CD4-positive, alpha-beta T cell (primary cell): ENCODE measurements at regions of chr16 and their contacts with region 1.

Region 1: DNA sequence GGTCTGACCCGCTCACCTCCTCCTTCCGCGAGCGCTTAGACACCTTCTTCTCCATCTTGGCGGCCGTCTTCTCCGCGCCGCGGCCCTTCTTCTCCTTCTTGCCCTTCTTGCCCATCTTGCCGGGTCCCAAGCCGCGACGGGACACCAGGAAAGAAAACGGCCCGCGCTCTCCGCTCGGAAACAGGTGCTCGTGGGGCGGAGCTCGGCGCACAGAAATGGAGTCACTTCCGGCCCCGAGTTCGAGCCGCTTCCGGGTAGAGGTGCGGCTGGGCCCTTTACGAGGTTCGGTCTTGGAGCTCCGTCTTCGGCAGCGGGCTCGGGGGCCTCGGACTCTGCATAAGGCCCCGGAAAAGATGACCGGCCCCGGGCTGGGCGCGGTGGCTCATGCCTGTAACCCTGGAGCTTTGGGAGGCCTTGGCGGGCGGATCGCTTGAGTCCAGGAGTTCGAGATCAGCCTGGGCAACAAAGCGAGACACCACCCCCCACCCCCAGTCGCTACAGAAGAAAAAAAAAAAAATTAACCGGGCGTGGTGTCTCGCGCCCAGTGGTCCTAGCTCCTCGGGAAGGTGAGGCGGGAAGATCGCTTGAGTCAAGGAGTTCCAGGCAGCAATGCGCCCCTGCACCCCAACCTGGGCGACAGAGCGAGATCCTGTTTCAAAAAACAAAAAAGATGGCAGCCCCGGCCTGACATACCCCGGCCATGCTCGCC is at the start of gene KLHDC4:
- DNase-seq: peak; percentile 79 to 94 (median 86)
- ATAC-seq: peak; percentile 74
- H3K4me3 ChIP-seq: peak within 1 kb of the TSS; percentile 95
- H3K4me3 Mint-ChIP-seq: peak within 1 kb of the TSS; percentile 99
- H3K27ac ChIP-seq: peak within 1 kb of the TSS; percentile 95
- H3K27ac Mint-ChIP-seq: peak within 1 kb of the TSS; percentile 97
- H3K4me1 ChIP-seq: peaks cover 49% of the 10 kb centered on the region
- H3K4me1 Mint-ChIP-seq: peaks cover 40% of the 10 kb centered on the region
- H3K27me3 ChIP-seq: no peaks in the 10 kb centered on the region
- H3K27me3 Mint-ChIP-seq: no peaks in the 10 kb centered on the region
- CTCF ChIP-seq: no peak
- total RNA-seq, gene KLHDC4: 41.4 to 43.0 TPM

Region 2: GRCh38 chr16:86365513-86366273 is 1400.2 kb before region 1 on chr16:
- CTCF ChIA-PET with region 1: no interaction called
- POLR2A ChIA-PET with region 1: no interaction called
- intact Hi-C with region 1: no loop called
- DNase-seq: no peak
- ATAC-seq: no peak
- H3K4me3 ChIP-seq: no peak overlapping the region
- H3K4me3 Mint-ChIP-seq: no peak overlapping the region
- H3K27ac ChIP-seq: no peak overlapping the region
- H3K27ac Mint-ChIP-seq: no peak overlapping the region
- H3K4me1 ChIP-seq: no peaks in the 10 kb centered on the region
- H3K4me1 Mint-ChIP-seq: no peaks in the 10 kb centered on the region
- H3K27me3 ChIP-seq: peaks cover 0 to 9% of the 10 kb centered on the region in 2 experiments
- H3K27me3 Mint-ChIP-seq: peaks cover 18% of the 10 kb centered on the region
- CTCF ChIP-seq: no peak

Region 3: GRCh38 chr16:87324411-87325275 is 441.3 kb before region 1 on chr16:
- CTCF ChIA-PET with region 1: no interaction called
- POLR2A ChIA-PET with region 1: no interaction called
- intact Hi-C with region 1: loop called in 1 of 2 experiments (anchors 10 kb)
- DNase-seq: peak; percentile 20 to 73 (median 39)
- ATAC-seq: peak; percentile 96
- H3K4me3 ChIP-seq: no peak overlapping the region
- H3K4me3 Mint-ChIP-seq: no peak overlapping the region
- H3K27ac ChIP-seq: no peak overlapping the region
- H3K27ac Mint-ChIP-seq: no peak overlapping the region
- H3K4me1 ChIP-seq: peaks cover 6% of the 10 kb centered on the region
- H3K4me1 Mint-ChIP-seq: no peaks in the 10 kb centered on the region
- H3K27me3 ChIP-seq: no peaks in the 10 kb centered on the region
- H3K27me3 Mint-ChIP-seq: no peaks in the 10 kb centered on the region
- CTCF ChIP-seq: peak; percentile 87

Region 4: DNA sequence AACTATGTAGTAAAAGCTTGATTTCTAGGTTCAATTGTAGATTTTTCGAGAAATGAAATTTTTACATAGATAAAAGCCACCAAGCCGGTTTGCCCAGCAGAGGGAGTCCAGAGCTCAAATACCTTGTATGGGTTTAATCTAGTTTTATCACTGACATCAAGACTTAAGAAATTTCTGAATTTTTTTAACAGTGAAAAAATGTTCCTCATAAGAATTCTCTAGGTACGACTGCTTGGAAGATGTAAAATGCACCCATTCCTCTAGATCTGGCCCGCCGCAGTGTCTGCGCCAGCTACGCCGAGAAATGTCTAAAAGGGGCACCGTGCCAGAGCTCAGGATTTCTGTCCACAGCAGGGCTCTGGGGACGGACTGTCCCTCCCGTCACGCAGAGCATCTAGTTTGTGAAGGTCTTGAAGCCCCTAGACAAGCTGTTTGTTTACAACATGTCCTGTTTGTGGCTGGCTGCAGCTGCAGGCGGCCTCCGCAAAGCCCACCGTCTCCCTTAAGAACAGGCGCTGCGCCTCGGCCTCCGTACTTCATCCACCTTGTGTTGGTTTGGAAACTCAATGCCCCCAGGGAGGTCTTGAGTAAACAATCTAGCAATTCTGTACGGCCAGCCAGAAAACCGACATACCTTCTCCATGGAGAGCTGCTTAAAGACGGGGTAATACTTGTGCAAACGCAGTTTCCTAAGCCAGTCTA is 349.0 kb before region 1 on chr16:
- CTCF ChIA-PET with region 1: no interaction called
- POLR2A ChIA-PET with region 1: no interaction called
- intact Hi-C with region 1: loop called in 1 of 2 experiments (anchors 1 kb)
- DNase-seq: peak in 9 of 14 experiments; percentile 13 to 57 (median 30)
- ATAC-seq: no peak
- H3K4me3 ChIP-seq: no peak overlapping the region
- H3K4me3 Mint-ChIP-seq: no peak overlapping the region
- H3K27ac ChIP-seq: no peak overlapping the region
- H3K27ac Mint-ChIP-seq: no peak overlapping the region
- H3K4me1 ChIP-seq: no peaks in the 10 kb centered on the region
- H3K4me1 Mint-ChIP-seq: no peaks in the 10 kb centered on the region
- H3K27me3 ChIP-seq: no peaks in the 10 kb centered on the region
- H3K27me3 Mint-ChIP-seq: no peaks in the 10 kb centered on the region
- CTCF ChIP-seq: peak; percentile 53

Region 5: GRCh38 chr16:87507351-87508069 is 258.4 kb before region 1 on chr16:
- CTCF ChIA-PET with region 1: no interaction called
- POLR2A ChIA-PET with region 1: no interaction called
- intact Hi-C with region 1: no loop called
- DNase-seq: no peak
- ATAC-seq: no peak
- H3K4me3 ChIP-seq: no peak overlapping the region
- H3K4me3 Mint-ChIP-seq: no peak overlapping the region
- H3K27ac ChIP-seq: no peak overlapping the region
- H3K27ac Mint-ChIP-seq: no peak overlapping the region
- H3K4me1 ChIP-seq: peaks cover 3% of the 10 kb centered on the region
- H3K4me1 Mint-ChIP-seq: peaks cover 7% of the 10 kb centered on the region
- H3K27me3 ChIP-seq: no peaks in the 10 kb centered on the region
- H3K27me3 Mint-ChIP-seq: peaks cover 48% of the 10 kb centered on the region
- CTCF ChIP-seq: no peak

Region 6: GRCh38 chr16:87550496-87550961 is 215.4 kb before region 1 on chr16:
- CTCF ChIA-PET with region 1: no interaction called
- POLR2A ChIA-PET with region 1: no interaction called
- intact Hi-C with region 1: loop called in 1 of 2 experiments (anchors 1 kb)
- DNase-seq: peak; percentile 39 to 75 (median 55)
- ATAC-seq: peak; percentile 41
- H3K4me3 ChIP-seq: no peak overlapping the region
- H3K4me3 Mint-ChIP-seq: no peak overlapping the region
- H3K27ac ChIP-seq: no peak overlapping the region
- H3K27ac Mint-ChIP-seq: no peak overlapping the region
- H3K4me1 ChIP-seq: no peaks in the 10 kb centered on the region
- H3K4me1 Mint-ChIP-seq: no peaks in the 10 kb centered on the region
- H3K27me3 ChIP-seq: no peaks in the 10 kb centered on the region
- H3K27me3 Mint-ChIP-seq: peaks cover 39% of the 10 kb centered on the region
- CTCF ChIP-seq: peak; percentile 97

Region 7: GRCh38 chr16:87723226-87723623 is 42.7 kb before region 1 on chr16:
- CTCF ChIA-PET with region 1: no interaction called
- POLR2A ChIA-PET with region 1: no interaction called
- intact Hi-C with region 1: loop called in 1 of 2 experiments (anchors 5 kb)
- DNase-seq: peak in 5 of 14 experiments; percentile 12 to 44 (median 28)
- ATAC-seq: peak; percentile 37
- H3K4me3 ChIP-seq: no peak overlapping the region
- H3K4me3 Mint-ChIP-seq: no peak overlapping the region
- H3K27ac ChIP-seq: no peak overlapping the region
- H3K27ac Mint-ChIP-seq: peak overlapping the region; percentile 32
- H3K4me1 ChIP-seq: no peaks in the 10 kb centered on the region
- H3K4me1 Mint-ChIP-seq: peaks cover 11% of the 10 kb centered on the region
- H3K27me3 ChIP-seq: no peaks in the 10 kb centered on the region
- H3K27me3 Mint-ChIP-seq: no peaks in the 10 kb centered on the region
- CTCF ChIP-seq: no peak

Region 8: DNA sequence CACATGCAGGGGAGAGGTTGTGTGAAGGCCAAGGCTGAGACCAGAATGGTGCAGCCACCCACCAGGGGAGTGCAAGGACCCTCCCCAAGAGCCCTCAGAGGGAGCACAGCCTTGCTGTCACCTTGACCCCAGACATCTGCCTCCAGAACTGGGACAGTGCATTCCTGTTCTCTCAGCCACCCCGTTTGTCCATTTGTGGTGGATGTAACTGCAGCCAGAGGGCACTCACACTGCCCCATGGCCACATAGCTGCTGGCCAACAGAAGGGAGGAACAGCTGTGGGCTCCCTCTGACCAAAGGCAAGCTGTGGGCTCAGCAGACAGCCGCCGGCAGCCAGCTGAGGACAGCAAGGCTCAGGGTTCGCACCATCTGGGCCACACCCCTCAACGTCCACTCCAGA is 49.6 kb after region 1 on chr16:
- CTCF ChIA-PET with region 1: no interaction called
- POLR2A ChIA-PET with region 1: no interaction called
- intact Hi-C with region 1: no loop called
- DNase-seq: no peak
- ATAC-seq: no peak
- H3K4me3 ChIP-seq: no peak overlapping the region
- H3K4me3 Mint-ChIP-seq: no peak overlapping the region
- H3K27ac ChIP-seq: no peak overlapping the region
- H3K27ac Mint-ChIP-seq: no peak overlapping the region
- H3K4me1 ChIP-seq: no peaks in the 10 kb centered on the region
- H3K4me1 Mint-ChIP-seq: peaks cover 4% of the 10 kb centered on the region
- H3K27me3 ChIP-seq: no peaks in the 10 kb centered on the region
- H3K27me3 Mint-ChIP-seq: no peaks in the 10 kb centered on the region
- CTCF ChIP-seq: no peak

Region 9: DNA sequence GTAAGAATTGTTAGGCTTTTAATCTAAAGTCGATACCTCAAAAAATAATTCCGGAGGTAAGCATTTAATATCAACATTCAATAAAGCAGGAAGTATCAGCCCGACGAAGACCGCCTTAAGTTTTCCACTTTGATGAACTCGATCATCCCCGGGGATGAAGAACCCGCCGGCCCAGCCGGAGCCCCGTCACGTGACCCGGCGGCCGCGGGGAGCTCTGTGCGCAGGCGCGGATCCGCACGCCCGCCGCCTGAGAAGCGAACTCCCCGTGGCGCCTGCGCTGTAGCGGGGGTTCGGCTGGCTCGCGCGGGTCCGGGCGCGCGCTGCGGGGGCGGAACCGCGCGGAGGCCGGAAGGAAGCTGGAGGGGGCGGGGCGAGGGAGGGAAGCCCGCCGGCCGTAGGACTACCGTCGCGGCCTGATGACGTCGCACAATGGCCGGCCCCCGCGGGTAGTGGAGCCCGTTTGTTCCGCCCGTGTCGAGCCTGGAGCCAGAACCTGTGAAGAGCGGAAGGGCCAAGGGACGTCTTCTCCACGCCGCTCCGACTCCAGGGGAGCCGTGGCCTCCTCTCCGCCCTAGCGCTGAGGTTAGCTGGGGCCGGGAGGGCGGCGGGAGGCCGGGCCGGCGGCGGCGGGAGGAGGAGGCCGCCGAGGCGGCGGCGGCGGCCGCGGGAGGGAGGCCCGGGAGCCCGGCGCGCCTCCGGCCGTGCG is 804.2 kb after region 1 on chr16 and contains the start of gene ZC3H18:
- CTCF ChIA-PET with region 1: no interaction called
- POLR2A ChIA-PET with region 1: interaction called, 3 read pairs
- intact Hi-C with region 1: loop called in 1 of 2 experiments (anchors 2 kb)
- DNase-seq: peak; percentile 93 to 100 (median 98)
- ATAC-seq: peak; percentile 93
- H3K4me3 ChIP-seq: peak within 1 kb of the TSS; percentile 65
- H3K4me3 Mint-ChIP-seq: peak within 1 kb of the TSS; percentile 88
- H3K27ac ChIP-seq: peak within 1 kb of the TSS; percentile 75 to 78
- H3K27ac Mint-ChIP-seq: peak within 1 kb of the TSS; percentile 87
- H3K4me1 ChIP-seq: peaks cover 31% of the 10 kb centered on the region
- H3K4me1 Mint-ChIP-seq: peaks cover 33% of the 10 kb centered on the region
- H3K27me3 ChIP-seq: no peaks in the 10 kb centered on the region
- H3K27me3 Mint-ChIP-seq: no peaks in the 10 kb centered on the region
- CTCF ChIP-seq: no peak
- total RNA-seq, gene ZC3H18: 92.6 to 93.7 TPM